SK-N-SH (cell line): ENCODE measurements at regions of chr6 and their contacts with region 1.

Region 1: DNA sequence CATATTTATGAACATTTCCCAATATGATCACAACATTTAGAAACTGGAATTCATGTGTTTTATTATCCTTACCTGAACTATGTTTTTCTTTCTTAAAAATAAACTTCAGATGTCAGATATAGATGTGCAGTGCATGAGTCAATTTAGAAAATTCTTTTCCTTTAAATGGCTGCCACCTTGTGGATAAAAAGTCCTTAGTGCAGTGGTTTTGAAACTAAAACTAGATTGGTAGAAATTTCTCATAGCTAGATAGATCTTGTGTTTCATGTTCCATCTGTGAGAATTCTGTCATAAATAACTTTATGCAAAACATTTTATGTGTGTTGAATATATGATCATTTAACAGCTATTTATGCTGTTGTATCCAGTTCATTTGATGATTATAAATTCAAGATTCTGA is 134.9 kb downstream of the KLHL32 start:
- DNase-seq: peak; percentile 57
- H3K4me3 ChIP-seq: peak overlapping the region in 1 of 2 experiments; percentile 2; a peak in 1 of 4 replicates
- H3K27ac ChIP-seq: no peak overlapping the region
- H3K4me1 ChIP-seq: no peaks in the 10 kb centered on the region
- H3K27me3 ChIP-seq: no peaks in the 10 kb centered on the region
- CTCF ChIP-seq: peak; percentile 79
- EP300 ChIP-seq: no peak
- RAD21 ChIP-seq: peak; percentile 85

Region 2: GRCh38 chr6:96626759-96627364 is 432.6 kb before region 1 on chr6:
- CTCF ChIA-PET with region 1: interaction called, 34 read pairs
- POLR2A ChIA-PET with region 1: no interaction called
- DNase-seq: peak; percentile 51
- H3K4me3 ChIP-seq: no peak overlapping the region
- H3K27ac ChIP-seq: no peak overlapping the region
- H3K4me1 ChIP-seq: no peaks in the 10 kb centered on the region
- H3K27me3 ChIP-seq: no peaks in the 10 kb centered on the region
- CTCF ChIP-seq: peak; percentile 67
- EP300 ChIP-seq: no peak
- RAD21 ChIP-seq: peak; percentile 84

Region 3: DNA sequence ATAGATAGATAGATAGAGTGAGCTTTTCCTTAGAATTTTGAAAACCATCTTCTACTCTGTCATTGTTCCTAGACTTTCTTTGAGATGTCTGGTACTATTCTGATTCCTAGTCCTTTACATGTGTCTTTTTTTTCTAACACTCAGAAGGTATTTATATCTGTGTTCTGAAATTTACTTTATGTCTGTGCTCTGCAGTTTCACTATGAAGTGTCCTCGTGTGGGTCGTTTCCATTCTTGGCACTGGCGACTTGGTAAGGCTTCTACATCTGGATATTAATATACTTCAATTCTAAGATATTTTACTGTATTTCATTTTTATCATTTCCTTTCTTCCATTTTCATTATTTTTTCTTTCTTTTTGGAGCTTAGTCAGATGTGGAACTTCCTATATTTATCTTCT is 409.5 kb before region 1 on chr6:
- CTCF ChIA-PET with region 1: no interaction called
- POLR2A ChIA-PET with region 1: no interaction called
- DNase-seq: no peak
- H3K4me3 ChIP-seq: no peak overlapping the region
- H3K27ac ChIP-seq: no peak overlapping the region
- H3K4me1 ChIP-seq: no peaks in the 10 kb centered on the region
- H3K27me3 ChIP-seq: no peaks in the 10 kb centered on the region
- CTCF ChIP-seq: no peak
- EP300 ChIP-seq: no peak
- RAD21 ChIP-seq: no peak

Region 4: GRCh38 chr6:96907498-96907897 is 152.0 kb before region 1 on chr6:
- CTCF ChIA-PET with region 1: interaction called, 33 read pairs
- POLR2A ChIA-PET with region 1: no interaction called
- DNase-seq: no peak
- H3K4me3 ChIP-seq: no peak overlapping the region
- H3K27ac ChIP-seq: no peak overlapping the region
- H3K4me1 ChIP-seq: no peaks in the 10 kb centered on the region; a peak in 1 of 4 replicates
- H3K27me3 ChIP-seq: no peaks in the 10 kb centered on the region
- CTCF ChIP-seq: no peak
- EP300 ChIP-seq: no peak
- RAD21 ChIP-seq: no peak

Region 5: DNA sequence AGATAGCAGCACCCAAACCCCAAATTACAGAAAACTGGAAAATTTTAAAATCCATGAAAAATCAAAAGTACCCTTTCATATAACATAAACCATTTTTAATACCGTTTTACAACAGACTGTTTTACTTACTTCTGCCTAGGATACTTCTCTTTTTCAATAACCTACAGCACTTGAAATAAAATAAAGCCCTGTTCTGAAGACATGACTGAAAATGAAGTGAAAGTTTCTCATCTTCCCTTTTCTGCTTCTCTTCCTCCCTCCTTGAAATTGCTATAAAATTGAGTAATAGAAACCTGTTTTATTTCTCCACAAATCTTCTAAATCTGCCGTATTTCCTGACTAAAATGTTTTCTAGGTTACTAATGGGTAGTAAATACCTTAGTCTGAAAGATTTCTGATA is 203.2 kb after region 1 on chr6:
- CTCF ChIA-PET with region 1: no interaction called
- POLR2A ChIA-PET with region 1: no interaction called
- DNase-seq: no peak
- H3K4me3 ChIP-seq: no peak overlapping the region
- H3K27ac ChIP-seq: no peak overlapping the region
- H3K4me1 ChIP-seq: no peaks in the 10 kb centered on the region
- H3K27me3 ChIP-seq: no peaks in the 10 kb centered on the region
- CTCF ChIP-seq: no peak
- EP300 ChIP-seq: no peak
- RAD21 ChIP-seq: no peak